IMR-90 (cell line): ENCODE measurements at regions of chr20 and their contacts with region 1.

Region 1: DNA sequence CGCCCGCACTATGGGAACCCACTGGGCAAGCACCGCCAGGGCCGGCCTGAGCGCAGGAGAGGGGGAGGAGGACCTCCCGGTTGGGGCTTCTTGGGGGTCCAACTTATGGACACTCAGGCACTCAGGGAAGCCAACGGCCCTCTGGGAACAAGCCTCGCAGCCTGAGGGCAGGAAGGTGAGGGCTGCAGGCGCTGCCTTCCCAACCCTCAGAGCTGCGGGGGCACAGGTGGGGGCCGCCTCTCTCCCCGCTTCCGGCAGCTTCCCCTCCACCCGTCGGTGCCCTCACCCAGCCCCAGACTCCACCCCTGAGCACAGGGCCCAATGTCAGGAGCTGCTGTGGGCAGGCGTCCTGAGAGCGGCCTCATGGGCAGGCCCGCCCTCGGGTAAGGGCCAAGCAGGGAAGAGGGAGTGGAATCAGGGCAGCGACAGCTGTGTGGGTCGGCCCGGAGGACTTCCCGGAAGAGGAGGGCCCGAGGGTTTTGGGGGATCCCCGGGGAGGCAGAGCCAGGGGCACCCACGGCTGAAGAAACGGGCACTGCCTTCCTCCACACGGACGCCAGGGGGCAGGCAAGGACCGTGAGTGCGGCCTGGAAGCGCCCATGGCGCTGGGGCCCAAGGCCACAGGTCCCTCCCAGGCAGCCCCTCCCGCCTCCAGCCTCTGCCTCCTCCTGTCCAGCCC is 488 bp upstream of the PTK6 start:
- DNase-seq: peak; percentile 86
- ATAC-seq: peak; percentile 95
- H3K4me3 ChIP-seq: 0 out of 2 replicates have a peak overlapping the region, but pooled peaks have one; percentile 12
- H3K27ac ChIP-seq: no peak overlapping the region; the same call in 1 of the 2 replicates
- H3K4me1 ChIP-seq: peaks cover 3% of the 10 kb centered on the region; the same call in 1 of the 2 replicates
- H3K27me3 ChIP-seq: peaks cover 4% of the 10 kb centered on the region; the same call in 1 of the 2 replicates
- CTCF ChIP-seq: peak; percentile 98
- POLR2A ChIP-seq: peak; percentile 62
- RAD21 ChIP-seq: peak; percentile 99

Region 2: GRCh38 chr20:63682384-63683139 is 144.9 kb after region 1 on chr20:
- CTCF ChIA-PET with region 1: no interaction called
- POLR2A ChIA-PET with region 1: no interaction called
- dilution Hi-C with region 1: no loop called
- in situ Hi-C with region 1: no loop called
- intact Hi-C with region 1: loop called (anchors 2 kb)
- DNase-seq: peak; percentile 98
- ATAC-seq: peak; percentile 91
- H3K4me3 ChIP-seq: no peak overlapping the region
- H3K27ac ChIP-seq: peak overlapping the region; percentile 92
- H3K4me1 ChIP-seq: peaks cover 31% of the 10 kb centered on the region
- H3K27me3 ChIP-seq: no peaks in the 10 kb centered on the region
- CTCF ChIP-seq: no peak
- POLR2A ChIP-seq: no peak
- RAD21 ChIP-seq: peak; percentile 28

Region 3: DNA sequence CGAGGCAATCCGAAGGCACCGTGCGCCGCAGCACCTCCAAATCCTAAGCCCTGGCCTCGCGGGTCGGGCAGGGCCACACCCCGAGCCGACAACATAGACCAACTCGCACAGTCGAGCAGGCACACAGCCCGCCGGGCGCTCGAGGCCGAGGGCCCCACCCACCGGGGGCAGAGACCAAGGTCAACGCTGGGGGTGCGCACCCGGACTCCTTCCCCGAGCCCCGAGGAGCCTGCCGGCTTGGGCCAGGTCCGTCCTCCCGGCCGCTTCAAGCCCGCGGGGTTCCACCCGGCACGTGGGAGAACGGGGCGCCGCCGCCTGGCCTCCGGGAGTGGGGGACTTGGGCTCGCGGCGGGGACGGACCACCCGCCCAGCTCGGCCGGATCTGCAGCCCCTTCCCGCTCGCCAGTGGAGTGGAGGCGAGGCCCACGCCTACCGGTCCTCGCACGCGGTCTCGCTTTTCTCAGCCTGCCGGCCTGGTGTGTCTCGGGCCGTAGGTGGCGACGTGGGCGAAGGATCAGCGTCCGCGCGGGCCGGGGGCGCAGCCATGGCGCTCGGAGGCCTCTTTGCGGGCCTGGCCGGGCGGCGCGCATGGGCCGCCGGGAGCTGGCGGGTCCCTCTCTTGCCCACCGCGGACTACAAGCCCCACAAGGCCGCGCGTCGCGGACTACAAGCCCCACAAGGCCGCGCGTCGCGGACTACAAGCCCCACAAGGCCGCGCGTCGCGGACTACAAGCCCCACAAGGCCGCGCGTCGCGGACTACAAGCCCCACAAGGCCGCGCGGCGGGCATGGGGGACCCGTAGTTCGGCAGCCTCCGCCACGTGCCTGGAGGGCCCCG is 418.4 kb after region 1 on chr20 and contains the start of gene UCKL1:
- CTCF ChIA-PET with region 1: no interaction called
- POLR2A ChIA-PET with region 1: no interaction called
- dilution Hi-C with region 1: no loop called
- in situ Hi-C with region 1: no loop called
- intact Hi-C with region 1: loop called (anchors 5 kb)
- DNase-seq: peak; percentile 91
- ATAC-seq: peak; percentile 79
- H3K4me3 ChIP-seq: peak within 1 kb of the TSS; percentile 94
- H3K27ac ChIP-seq: peak within 1 kb of the TSS; percentile 99
- H3K4me1 ChIP-seq: peaks cover 24% of the 10 kb centered on the region
- H3K27me3 ChIP-seq: no peaks in the 10 kb centered on the region
- CTCF ChIP-seq: no peak
- POLR2A ChIP-seq: peak; percentile 33; the same call in 1 of the 2 replicates
- RAD21 ChIP-seq: no peak
- total RNA-seq, gene UCKL1: 16.7 and 18.3 TPM in 2 replicates

Region 4: DNA sequence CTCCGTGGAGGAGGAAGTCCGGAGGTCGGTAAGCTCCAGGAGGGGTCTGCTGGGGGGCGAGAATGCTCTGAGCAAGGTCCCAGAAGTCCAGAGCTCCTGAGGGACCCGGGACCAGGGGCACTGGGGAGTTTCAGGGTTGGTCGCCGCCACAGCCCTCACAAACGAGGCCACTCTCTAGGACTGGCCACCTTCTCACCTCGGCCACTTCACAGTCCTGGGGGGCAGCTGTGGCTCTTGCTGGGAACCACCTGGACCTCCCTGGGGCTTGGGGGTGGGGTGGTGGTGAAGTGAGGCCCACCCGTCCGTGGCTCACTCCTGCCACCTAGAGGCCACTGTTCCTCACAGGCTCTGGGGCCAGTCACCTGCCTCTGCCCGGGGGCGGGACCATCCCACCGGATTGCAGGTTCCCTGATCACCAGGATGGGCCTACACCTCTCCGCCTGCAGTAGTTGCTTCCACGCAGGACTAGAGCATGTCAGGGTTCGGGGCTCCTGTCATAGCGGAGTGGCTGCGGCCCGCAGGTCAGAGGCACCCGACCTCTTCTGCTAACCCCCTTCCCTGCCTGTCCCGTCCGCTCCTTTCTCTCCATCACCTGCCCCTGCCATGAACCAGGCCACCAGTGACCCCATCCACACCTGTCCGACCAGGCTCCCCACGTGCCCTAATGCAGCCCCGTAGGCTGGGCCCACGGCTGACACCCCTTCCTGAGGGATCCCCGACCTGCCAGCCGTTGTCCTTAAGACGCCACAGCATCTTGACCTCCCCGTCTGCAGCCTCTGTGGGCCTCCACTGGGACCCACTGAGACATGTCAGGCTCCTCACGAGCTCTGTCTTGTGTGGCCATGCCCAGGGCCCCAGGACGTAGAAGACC is 520.2 kb after region 1 on chr20:
- CTCF ChIA-PET with region 1: no interaction called
- POLR2A ChIA-PET with region 1: no interaction called
- dilution Hi-C with region 1: no loop called
- in situ Hi-C with region 1: no loop called
- intact Hi-C with region 1: loop called (anchors 5 kb)
- DNase-seq: peak; percentile 40
- ATAC-seq: peak; percentile 71
- H3K4me3 ChIP-seq: no peak overlapping the region
- H3K27ac ChIP-seq: no peak overlapping the region
- H3K4me1 ChIP-seq: peaks cover 11% of the 10 kb centered on the region
- H3K27me3 ChIP-seq: peaks cover 2% of the 10 kb centered on the region; the same call in 1 of the 2 replicates
- CTCF ChIP-seq: peak; percentile 77
- POLR2A ChIP-seq: no peak
- RAD21 ChIP-seq: peak; percentile 66